Activated T-helper 2 cell treated with anti-CD3 and anti-CD28 coated beads, Interferon-gamma antibody, Interleukin-2, Interleukin-4, amounts not matched to agents 10 μg/mL and 5 μg/mL and 100 μg/mL, durations not matched to agents 14 hours and 24 hours and 36 hours (primary cell): ENCODE measurements at regions of chr22 and their contacts with region 1.

Region 1: DNA sequence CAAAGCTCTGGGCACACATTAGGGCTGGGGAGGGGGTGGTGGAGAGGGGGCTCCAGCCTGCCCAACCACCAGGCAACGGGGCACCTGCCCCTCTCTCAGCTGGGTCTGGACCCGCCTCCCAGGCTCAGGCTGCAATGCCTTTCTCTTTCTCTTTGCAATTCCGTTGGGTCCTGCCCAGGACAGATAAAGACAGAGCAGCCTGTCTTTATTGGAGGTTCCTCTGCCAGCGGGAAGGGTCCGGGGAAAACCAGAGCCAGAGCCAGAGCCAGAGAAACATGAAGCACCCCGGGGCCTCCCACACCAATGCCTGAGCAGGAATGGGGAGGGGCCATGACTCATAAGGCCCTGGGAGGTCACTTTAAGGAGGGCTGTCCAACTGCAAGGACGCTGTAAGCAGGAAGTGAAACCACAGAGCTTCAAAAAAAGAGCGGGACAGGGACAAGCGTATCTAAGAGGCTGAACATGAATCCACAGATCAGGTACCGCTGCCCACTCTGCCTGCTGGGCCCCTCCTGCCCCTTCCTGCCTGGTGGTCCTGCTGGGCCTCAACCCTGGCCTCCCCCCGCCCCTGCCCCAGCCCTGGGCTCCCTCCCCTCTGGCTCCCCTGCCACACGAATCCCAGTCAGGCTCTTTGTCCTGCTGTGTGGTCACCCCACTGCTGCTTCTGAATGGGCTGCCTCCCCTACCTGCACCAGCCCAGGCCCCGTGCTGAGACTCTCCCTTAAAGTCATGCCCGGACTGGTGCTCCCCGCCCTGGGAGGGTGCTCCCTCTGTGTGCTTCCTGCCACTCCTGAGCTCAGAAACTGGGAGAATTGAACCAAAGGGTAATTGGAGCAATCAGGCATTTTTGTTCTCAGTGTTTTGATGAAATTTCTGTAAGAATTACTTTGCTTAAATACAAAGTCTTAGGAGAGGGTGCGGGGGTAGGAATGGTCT is at the start of gene APOBEC3B:
- DNase-seq: peak; percentile 76
- H3K4me3 Mint-ChIP-seq: peak within 1 kb of the TSS; percentile 84
- H3K27ac Mint-ChIP-seq: peak within 1 kb of the TSS; percentile 95
- H3K4me1 Mint-ChIP-seq: peaks cover 41% of the 10 kb centered on the region
- H3K27me3 Mint-ChIP-seq: peaks cover 2% of the 10 kb centered on the region
- total RNA-seq, gene APOBEC3B: 17.0 and 17.2 TPM in 2 replicates

Region 2: DNA sequence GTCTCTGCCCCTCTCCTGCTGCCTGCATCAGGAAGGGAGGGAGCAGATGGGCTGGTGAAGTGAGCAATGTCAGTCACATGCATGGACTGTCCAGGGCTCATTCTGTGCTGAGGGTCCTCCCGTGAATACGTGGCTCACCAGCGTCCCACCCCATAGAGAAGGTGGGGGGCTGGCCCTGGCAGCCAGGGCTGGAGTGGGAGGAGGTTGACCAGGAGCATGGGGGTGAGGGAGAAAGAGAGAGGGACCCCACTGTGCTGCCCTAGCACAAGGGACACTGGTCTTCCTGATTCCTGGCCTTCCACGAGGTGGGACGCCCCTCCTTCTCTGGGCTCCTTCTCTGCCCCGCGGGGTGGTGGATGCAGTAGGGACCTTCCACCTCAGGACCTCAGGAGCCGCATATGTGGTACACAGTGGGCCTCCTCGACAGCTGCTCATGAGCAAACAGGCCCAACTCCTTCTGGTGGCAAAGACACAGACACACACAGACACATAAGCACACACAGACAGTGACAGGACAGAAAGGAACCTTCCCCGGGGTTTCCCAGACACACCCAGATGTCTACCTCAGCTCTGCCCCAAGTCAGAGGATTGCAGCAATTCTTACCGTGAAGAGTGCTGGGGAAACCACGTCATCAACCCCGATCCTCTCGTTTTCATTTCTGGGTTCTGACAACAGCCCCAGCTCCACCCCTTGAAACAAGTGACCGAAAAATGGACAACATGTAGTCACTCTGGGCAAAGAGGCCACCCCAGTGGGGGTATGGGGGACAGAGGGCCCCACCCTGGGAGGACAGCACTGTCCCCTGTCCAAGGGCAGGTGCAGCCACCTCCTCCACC is 28.5 kb before region 1 on chr22:
- intact Hi-C with region 1: loop called (anchors 1 kb)
- DNase-seq: peak; percentile 72
- H3K4me3 Mint-ChIP-seq: no peak overlapping the region
- H3K27ac Mint-ChIP-seq: peak overlapping the region; percentile 90
- H3K4me1 Mint-ChIP-seq: peaks cover 42% of the 10 kb centered on the region
- H3K27me3 Mint-ChIP-seq: peaks cover 6% of the 10 kb centered on the region